ENCODE measurements at regions of chr17 and their contacts with region 1.

Region 1: DNA sequence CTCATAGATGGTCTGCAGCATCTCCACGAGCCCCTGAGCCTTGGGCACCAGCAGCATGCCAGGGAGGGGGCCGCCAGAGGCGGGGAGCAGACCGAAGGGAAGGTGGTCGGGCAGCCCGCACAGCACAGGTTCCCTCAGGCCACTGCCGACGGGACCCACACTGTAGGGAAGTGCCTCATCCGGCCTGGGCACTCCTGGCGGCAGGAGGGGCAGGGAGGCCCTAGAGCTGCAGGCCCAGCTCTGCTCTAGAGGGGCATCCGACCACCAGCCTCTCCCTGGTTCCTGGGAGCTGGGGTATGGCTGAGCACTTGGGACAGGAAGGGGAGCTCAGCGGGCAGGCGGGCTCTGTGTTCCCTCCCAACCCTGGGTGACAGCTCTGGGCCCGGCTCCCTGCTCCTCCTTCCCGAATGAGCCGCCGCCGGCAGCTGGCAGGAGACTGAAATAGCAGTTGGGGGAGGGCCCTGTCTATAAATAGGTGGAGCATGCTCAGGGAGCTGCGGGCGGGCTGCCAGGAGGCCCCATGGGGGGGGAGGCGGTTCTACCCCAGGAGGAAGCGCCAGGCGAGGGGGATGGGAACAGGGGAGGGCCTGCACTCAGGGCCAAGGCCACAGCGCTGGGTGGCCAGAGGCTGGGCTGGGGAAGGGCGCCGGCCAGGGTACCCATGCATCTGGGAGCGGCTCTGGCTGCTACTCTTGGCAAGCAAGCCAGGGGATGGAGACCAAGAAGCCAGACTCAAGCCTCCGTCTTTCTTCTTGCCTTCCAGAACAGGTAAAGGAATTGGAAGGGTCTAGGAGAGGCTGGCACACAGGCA is 12.4 kb downstream of the HDAC5 start:
- DNase-seq: peak; percentile 43
- H3K4me3 Mint-ChIP-seq: no peak overlapping the region
- H3K27ac Mint-ChIP-seq: no peak overlapping the region
- H3K4me1 Mint-ChIP-seq: peaks cover 5% of the 10 kb centered on the region
- H3K27me3 Mint-ChIP-seq: no peaks in the 10 kb centered on the region

Region 2: GRCh38 chr17:43823350-43824084 is 287.5 kb before region 1 on chr17:
- CTCF ChIA-PET with region 1: no interaction called
- POLR2A ChIA-PET with region 1: no interaction called
- DNase-seq: no peak
- H3K4me3 Mint-ChIP-seq: no peak overlapping the region
- H3K27ac Mint-ChIP-seq: no peak overlapping the region
- H3K4me1 Mint-ChIP-seq: no peaks in the 10 kb centered on the region
- H3K27me3 Mint-ChIP-seq: no peaks in the 10 kb centered on the region

Region 3: GRCh38 chr17:44084131-44084544 is 26.9 kb before region 1 on chr17:
- CTCF ChIA-PET with region 1: interaction called, 11 read pairs
- POLR2A ChIA-PET with region 1: no interaction called
- DNase-seq: peak; percentile 26
- H3K4me3 Mint-ChIP-seq: no peak overlapping the region
- H3K27ac Mint-ChIP-seq: no peak overlapping the region
- H3K4me1 Mint-ChIP-seq: peaks cover 10% of the 10 kb centered on the region
- H3K27me3 Mint-ChIP-seq: no peaks in the 10 kb centered on the region

Region 4: DNA sequence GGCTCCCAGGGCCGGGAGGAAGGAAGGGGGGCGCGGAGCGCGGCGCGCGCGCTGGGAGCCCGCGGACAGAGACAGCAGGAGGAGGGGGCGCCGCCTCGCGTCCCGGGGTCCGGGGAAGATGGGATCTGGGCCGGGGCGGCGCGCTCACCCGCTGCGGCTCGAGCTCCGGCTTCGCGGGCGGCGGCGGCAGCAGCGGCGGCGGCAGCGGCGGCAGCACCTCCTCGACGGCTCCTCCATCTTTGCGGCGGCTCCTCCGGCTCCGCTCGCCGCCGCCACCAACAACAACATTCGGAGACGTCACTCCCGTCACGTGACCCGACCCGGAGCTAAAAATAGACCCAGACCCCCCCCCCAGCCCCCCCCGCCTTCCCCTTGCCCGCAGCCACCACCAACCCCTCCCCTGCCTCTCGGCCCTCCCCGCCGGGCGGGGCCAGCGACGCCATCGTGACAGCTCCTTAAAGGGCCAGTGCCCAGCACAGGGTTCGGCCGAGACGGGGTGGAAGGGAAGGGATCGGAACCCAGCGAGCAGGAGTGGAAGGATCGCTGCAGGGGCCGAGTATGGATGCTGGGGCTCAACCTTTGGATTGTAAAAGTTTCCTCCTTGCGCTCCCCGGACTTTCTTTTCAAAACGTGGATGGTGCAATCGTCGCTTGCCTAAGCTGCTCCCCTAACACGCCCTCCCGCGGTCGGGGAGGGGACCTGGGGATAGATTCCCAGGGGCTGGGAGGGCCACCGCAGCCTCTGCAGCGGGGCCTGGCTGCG is 12.5 kb after region 1 on chr17 and contains the start of gene HDAC5:
- CTCF ChIA-PET with region 1: interaction called, 5 read pairs
- POLR2A ChIA-PET with region 1: interaction called, 12 read pairs
- DNase-seq: peak; percentile 97
- H3K4me3 Mint-ChIP-seq: peak within 1 kb of the TSS; percentile 90
- H3K27ac Mint-ChIP-seq: peak within 1 kb of the TSS; percentile 83
- H3K4me1 Mint-ChIP-seq: peaks cover 22% of the 10 kb centered on the region
- H3K27me3 Mint-ChIP-seq: peaks cover 2% of the 10 kb centered on the region
- total RNA-seq, gene HDAC5: 42.2 to 42.7 TPM

Region 5: GRCh38 chr17:44141717-44142285 is 30.8 kb after region 1 on chr17 and contains the start of gene HROB:
- CTCF ChIA-PET with region 1: interaction called, 12 read pairs
- POLR2A ChIA-PET with region 1: no interaction called
- DNase-seq: peak; percentile 98
- H3K4me3 Mint-ChIP-seq: peak within 1 kb of the TSS; percentile 87
- H3K27ac Mint-ChIP-seq: peak within 1 kb of the TSS; percentile 83
- H3K4me1 Mint-ChIP-seq: peaks cover 38% of the 10 kb centered on the region
- H3K27me3 Mint-ChIP-seq: no peaks in the 10 kb centered on the region
- total RNA-seq, gene HROB: 13.4 to 13.5 TPM

Region 6: DNA sequence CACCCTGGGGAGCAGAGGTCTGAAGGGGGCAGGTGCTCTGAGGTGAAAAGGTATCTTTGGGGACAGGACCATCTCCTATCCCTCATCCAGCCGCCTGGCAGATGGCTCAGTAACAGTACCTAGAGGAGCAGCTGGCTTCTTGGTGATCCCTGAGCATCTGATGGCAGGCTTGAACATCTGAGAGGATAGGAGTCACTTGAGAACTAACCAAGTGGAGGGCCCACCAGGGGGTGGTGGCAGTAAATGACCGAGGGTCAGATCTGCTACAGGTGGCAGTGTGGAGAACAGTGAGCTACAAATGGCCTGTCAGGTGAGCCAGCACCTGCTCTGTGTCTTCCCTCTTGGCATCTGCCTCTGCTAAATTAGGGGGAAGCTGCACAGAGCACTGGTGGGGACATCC is 44.5 kb after region 1 on chr17:
- CTCF ChIA-PET with region 1: no interaction called
- POLR2A ChIA-PET with region 1: no interaction called
- DNase-seq: no peak
- H3K4me3 Mint-ChIP-seq: no peak overlapping the region
- H3K27ac Mint-ChIP-seq: no peak overlapping the region
- H3K4me1 Mint-ChIP-seq: peaks cover 23% of the 10 kb centered on the region
- H3K27me3 Mint-ChIP-seq: no peaks in the 10 kb centered on the region

Measured in activated CD4-positive, alpha-beta memory T cell treated with anti-CD3 and anti-CD28 coated beads, Interleukin-2, amount 10 ng/mL, durations not matched to agents 7 days and 5 days (primary cell).